ENCODE measurements at regions of chr11 and their contacts with region 1.

Region 1: DNA sequence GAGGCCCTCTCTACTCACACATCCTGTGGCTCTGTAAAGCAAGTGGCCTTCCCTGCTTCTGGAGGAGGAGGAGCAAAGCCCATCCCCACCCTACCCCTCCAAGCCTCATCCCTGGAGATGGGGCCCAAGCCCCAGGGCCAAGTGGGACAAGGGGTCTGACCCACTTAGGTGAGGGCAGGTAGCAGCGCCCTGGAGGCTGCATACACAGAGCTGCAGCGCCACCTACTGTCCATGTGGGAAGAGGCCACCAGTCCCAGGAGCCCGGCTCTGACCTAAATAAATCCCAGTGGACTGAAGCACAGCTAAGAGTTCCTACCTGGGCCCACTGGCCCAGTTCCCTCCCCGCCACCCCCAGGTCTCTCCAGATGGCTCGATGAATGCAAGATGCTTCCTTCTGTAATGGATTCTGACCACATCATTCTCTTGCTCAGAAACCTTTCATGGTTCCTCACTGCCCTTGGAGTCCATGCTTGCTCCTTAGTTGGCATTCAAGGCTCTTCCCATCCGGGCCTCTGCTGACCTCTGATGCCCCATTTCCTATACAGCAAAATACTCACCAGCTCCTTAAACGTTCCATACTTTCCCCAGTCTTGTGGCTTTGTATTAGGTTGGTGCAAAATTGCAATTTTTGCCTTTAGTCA is 62.1 kb downstream of the THAP12 start:
- DNase-seq: peak; percentile 58 to 82
- H3K4me3 ChIP-seq: no peak overlapping the region
- H3K27ac ChIP-seq: no peak overlapping the region
- H3K4me1 ChIP-seq: 0 out of 2 replicates have a peak, but pooled peaks cover 6% of the 10 kb centered on the region
- H3K27me3 ChIP-seq: no peaks in the 10 kb centered on the region
- CTCF ChIP-seq: peak; percentile 99

Region 2: DNA sequence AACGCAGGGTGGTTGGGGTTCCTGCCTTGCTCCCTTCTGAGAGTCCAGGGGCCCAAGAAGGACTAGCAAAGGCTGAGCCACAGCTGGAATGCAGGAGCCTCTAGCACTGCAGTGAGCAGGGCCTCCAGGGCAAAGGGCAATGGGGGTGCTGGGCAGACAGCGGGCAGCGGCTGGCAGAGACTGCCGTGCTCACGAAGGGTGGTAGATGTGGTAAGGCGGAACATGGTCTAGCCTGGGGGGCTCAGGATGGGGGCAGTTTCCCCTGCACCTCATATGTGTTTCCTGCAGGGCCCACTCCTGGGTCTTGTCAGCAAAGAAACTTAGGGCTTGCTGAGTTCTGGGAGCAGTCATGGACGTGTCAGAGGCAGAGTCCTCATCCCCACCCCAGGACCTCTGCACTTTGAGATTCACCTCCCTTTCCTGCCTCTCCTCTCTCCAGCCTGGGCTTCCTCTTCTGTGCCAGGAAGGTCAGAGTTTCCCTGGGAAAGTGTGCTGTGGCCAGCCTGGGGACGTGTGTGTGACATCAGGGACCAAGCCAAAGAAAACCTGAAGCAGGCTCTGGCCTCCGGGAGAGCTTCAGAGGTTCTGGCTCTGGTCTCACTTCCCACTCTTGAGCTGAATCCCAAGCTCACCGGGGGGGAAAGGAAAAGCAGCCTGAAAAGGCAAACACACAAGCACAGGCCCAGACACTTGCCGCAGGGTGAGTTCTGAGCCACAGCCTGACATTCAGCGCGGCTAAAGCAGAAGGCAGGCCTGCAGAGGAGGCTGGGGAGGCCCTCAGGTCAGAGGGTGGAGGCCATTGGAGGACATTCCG is 596.8 kb before region 1 on chr11:
- CTCF ChIA-PET with region 1: no interaction called
- POLR2A ChIA-PET with region 1: no interaction called
- intact Hi-C with region 1: loop called (anchors 2 kb)
- DNase-seq: no peak
- H3K4me3 ChIP-seq: no peak overlapping the region
- H3K27ac ChIP-seq: no peak overlapping the region
- H3K4me1 ChIP-seq: peaks cover 11% of the 10 kb centered on the region
- H3K27me3 ChIP-seq: no peaks in the 10 kb centered on the region
- CTCF ChIP-seq: no peak

Region 3: GRCh38 chr11:76096552-76096951 is 222.3 kb before region 1 on chr11:
- CTCF ChIA-PET with region 1: no interaction called
- POLR2A ChIA-PET with region 1: no interaction called
- intact Hi-C with region 1: no loop called
- DNase-seq: peak; percentile 3 to 69
- H3K4me3 ChIP-seq: no peak overlapping the region
- H3K27ac ChIP-seq: peak overlapping the region; percentile 81
- H3K4me1 ChIP-seq: peaks cover 20% of the 10 kb centered on the region
- H3K27me3 ChIP-seq: no peaks in the 10 kb centered on the region
- CTCF ChIP-seq: no peak

Region 4: GRCh38 chr11:76152086-76152681 is 166.7 kb before region 1 on chr11:
- CTCF ChIA-PET with region 1: no interaction called
- POLR2A ChIA-PET with region 1: no interaction called
- intact Hi-C with region 1: loop called (anchors 5 kb)
- DNase-seq: peak in 1 of 2 experiments; percentile 76
- H3K4me3 ChIP-seq: no peak overlapping the region
- H3K27ac ChIP-seq: peak overlapping the region; percentile 88
- H3K4me1 ChIP-seq: peaks cover 37% of the 10 kb centered on the region
- H3K27me3 ChIP-seq: no peaks in the 10 kb centered on the region
- CTCF ChIP-seq: peak; percentile 72

Region 5: GRCh38 chr11:76410851-76411357 is 92.0 kb after region 1 on chr11:
- CTCF ChIA-PET with region 1: interaction called, 10 read pairs
- POLR2A ChIA-PET with region 1: no interaction called
- intact Hi-C with region 1: no loop called
- DNase-seq: no peak
- H3K4me3 ChIP-seq: no peak overlapping the region
- H3K27ac ChIP-seq: no peak overlapping the region
- H3K4me1 ChIP-seq: no peaks in the 10 kb centered on the region
- H3K27me3 ChIP-seq: no peaks in the 10 kb centered on the region
- CTCF ChIP-seq: no peak

Measured in PC-9 (cell line).